Heart left ventricle (tissue), 16 donors: ENCODE measurements at regions of chr12 and their contacts with region 1.

Region 1: GRCh38 chr12:52372216-52373154 is 5.2 kb upstream of the KRT85 start:
- DNase-seq: peak; percentile 70 to 84 (median 79)
- ATAC-seq: peak; percentile 66 to 90 (median 82)
- H3K4me3 ChIP-seq: no peak overlapping the region
- H3K27ac ChIP-seq: no peak overlapping the region
- H3K4me1 ChIP-seq: peaks cover 0 to 10% (median 0%) of the 10 kb centered on the region in 12 donors
- H3K27me3 ChIP-seq: peaks cover 0 to 12% (median 0%) of the 10 kb centered on the region in 9 donors
- CTCF ChIP-seq: peak; percentile 60 to 84 (median 74)
- POLR2A ChIP-seq: no peak

Region 2: DNA sequence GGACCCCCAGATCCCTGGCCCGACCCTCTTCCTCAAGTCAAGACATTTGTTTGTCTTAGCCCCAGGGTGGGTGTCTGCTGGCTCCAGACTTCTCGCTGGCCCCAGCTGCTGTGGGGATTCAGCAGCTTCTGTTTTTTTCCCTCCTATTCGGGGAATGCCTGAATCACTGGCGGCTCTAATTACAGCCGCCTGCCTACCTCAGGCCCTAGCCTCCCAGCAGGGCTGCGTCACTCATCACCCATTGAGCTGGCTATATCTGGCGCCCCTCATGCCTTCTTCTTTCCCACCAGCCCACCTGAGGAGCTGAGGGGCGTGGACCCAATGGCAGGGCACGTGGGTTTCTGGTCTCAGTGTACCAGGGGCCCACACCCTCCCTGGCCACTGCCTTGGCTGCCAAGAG is 190.7 kb before region 1 on chr12:
- intact Hi-C with region 1: no loop called
- DNase-seq: peak in 1 of 5 donors; percentile 39
- ATAC-seq: no peak
- H3K4me3 ChIP-seq: no peak overlapping the region
- H3K27ac ChIP-seq: no peak overlapping the region
- H3K4me1 ChIP-seq: peaks cover 0 to 62% (median 19%) of the 10 kb centered on the region in 12 donors
- H3K27me3 ChIP-seq: no peaks in the 10 kb centered on the region
- CTCF ChIP-seq: no peak
- POLR2A ChIP-seq: no peak

Region 3: DNA sequence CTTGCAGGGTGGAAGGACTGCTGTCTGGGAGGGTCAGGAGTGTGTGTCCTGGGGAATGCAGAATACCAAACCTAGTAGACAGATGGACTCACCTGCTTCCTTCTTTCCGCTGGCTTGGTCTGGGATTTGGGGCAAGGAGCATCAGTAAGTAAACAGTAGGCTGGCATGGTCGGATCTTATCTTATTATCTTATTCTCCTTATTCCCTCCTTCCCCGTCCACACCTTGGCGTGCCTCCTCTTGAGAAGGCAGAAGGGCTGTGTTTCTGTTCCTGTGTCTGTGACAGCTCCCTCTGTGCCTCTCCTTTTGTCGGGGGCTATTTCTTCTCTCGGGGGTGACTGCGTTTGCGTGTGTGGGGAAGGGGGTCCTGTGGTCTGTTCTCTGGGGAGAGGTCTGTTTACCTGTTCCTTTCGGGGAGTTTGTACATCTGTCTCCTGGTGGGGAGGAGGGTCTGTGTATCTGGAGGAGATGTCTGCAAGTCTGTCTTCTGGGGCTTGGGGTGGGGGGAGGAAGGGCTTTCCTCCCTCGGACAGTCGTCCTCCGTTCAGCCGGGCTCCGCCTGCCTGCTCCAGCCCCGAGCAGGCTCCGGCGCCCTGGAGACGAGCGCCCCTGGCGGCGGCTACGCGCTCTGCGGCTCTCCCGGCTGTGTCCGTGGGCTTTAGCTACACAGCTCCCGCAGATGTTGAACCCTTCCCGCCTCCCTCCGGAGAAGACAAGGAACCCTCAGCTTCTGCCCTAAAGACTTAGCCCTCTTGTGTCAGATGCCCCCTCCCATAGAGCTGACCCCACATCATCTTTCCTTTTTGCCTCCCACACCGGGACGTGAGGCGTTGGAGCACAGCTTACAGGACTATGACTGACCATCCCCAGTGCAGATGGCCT is 93.7 kb before region 1 on chr12:
- intact Hi-C with region 1: no loop called
- DNase-seq: peak; percentile 61 to 90 (median 70)
- ATAC-seq: peak; percentile 79 to 96 (median 92)
- H3K4me3 ChIP-seq: no peak overlapping the region
- H3K27ac ChIP-seq: peak overlapping the region in 1 of 12 donors; percentile 79
- H3K4me1 ChIP-seq: peaks cover 0 to 29% (median 11%) of the 10 kb centered on the region in 12 donors
- H3K27me3 ChIP-seq: peaks cover 0 to 31% (median 3%) of the 10 kb centered on the region in 9 donors
- CTCF ChIP-seq: peak; percentile 94 to 99 (median 98)
- POLR2A ChIP-seq: no peak

Region 4: DNA sequence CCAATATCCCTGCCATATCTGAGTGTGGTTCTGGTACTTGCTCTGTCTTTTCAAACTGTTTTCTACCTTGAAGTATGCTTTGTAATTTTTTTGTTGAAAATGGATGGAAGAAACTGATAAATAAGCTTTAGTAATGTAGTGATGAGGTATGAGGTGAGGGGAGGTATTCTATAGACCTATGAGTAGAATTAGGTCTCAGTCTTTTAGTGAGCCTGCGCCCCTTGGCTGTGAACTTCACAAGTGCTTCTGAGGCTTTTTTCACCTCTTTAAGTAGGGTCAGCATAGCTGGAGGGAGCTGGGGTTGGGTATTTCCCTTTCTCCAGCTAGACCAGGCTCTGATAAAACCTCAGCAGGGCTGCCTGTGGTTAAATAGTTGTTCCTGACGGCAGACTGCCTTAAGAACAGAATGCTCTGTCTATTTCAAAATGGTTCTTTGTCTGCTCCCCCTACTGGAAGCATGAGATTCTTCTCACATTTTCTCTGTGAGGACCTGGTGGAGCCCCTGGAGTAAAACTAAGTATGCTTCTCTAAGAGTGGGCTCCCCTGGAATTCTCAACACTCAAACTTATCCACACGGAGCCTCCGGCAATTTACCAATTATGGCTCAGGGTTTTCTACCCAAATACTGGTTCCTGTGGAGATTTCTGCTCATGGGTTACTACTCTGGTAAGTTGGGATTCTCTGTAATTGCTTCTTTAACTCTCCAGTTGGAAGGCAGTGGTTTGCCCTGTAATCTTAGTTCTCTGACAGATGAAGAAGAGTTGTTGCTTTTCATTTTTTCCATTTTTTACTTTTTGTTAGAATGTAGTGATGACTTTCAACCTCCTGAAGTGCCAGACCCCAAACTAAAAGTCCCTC is 134.6 kb after region 1 on chr12:
- intact Hi-C with region 1: loop called in 9 of 10 experiments (anchors 1 to 5 kb)
- DNase-seq: no peak
- ATAC-seq: peak in 3 of 4 donors; percentile 39 to 69 (median 51)
- H3K4me3 ChIP-seq: no peak overlapping the region
- H3K27ac ChIP-seq: no peak overlapping the region
- H3K4me1 ChIP-seq: peaks cover 0 to 3% (median 0%) of the 10 kb centered on the region in 12 donors
- H3K27me3 ChIP-seq: peaks cover 0 to 29% (median 0%) of the 10 kb centered on the region in 9 donors
- CTCF ChIP-seq: peak; percentile 31 to 63 (median 49)
- POLR2A ChIP-seq: no peak

Region 5: GRCh38 chr12:52865090-52865944 is 492.8 kb after region 1 on chr12:
- intact Hi-C with region 1: loop called in 2 of 10 experiments (anchors 5 kb)
- DNase-seq: peak; percentile 43 to 77 (median 61)
- ATAC-seq: peak in 3 of 4 donors; percentile 59 to 75 (median 62)
- H3K4me3 ChIP-seq: no peak overlapping the region
- H3K27ac ChIP-seq: no peak overlapping the region
- H3K4me1 ChIP-seq: peaks cover 0 to 5% (median 0%) of the 10 kb centered on the region in 12 donors
- H3K27me3 ChIP-seq: no peaks in the 10 kb centered on the region
- CTCF ChIP-seq: peak; percentile 56 to 80 (median 73)
- POLR2A ChIP-seq: no peak

Region 6: GRCh38 chr12:52870351-52871290 is 498.1 kb after region 1 on chr12:
- intact Hi-C with region 1: loop called in 5 of 10 experiments (anchors 5 kb)
- DNase-seq: peak; percentile 24 to 77 (median 52)
- ATAC-seq: peak in 3 of 4 donors; percentile 12 to 38 (median 38)
- H3K4me3 ChIP-seq: no peak overlapping the region
- H3K27ac ChIP-seq: peak overlapping the region in 5 of 12 donors; percentile 13 to 55 (median 36)
- H3K4me1 ChIP-seq: peaks cover 0 to 39% (median 10%) of the 10 kb centered on the region in 12 donors
- H3K27me3 ChIP-seq: no peaks in the 10 kb centered on the region
- CTCF ChIP-seq: peak; percentile 47 to 73 (median 64)
- POLR2A ChIP-seq: no peak

Region 7: DNA sequence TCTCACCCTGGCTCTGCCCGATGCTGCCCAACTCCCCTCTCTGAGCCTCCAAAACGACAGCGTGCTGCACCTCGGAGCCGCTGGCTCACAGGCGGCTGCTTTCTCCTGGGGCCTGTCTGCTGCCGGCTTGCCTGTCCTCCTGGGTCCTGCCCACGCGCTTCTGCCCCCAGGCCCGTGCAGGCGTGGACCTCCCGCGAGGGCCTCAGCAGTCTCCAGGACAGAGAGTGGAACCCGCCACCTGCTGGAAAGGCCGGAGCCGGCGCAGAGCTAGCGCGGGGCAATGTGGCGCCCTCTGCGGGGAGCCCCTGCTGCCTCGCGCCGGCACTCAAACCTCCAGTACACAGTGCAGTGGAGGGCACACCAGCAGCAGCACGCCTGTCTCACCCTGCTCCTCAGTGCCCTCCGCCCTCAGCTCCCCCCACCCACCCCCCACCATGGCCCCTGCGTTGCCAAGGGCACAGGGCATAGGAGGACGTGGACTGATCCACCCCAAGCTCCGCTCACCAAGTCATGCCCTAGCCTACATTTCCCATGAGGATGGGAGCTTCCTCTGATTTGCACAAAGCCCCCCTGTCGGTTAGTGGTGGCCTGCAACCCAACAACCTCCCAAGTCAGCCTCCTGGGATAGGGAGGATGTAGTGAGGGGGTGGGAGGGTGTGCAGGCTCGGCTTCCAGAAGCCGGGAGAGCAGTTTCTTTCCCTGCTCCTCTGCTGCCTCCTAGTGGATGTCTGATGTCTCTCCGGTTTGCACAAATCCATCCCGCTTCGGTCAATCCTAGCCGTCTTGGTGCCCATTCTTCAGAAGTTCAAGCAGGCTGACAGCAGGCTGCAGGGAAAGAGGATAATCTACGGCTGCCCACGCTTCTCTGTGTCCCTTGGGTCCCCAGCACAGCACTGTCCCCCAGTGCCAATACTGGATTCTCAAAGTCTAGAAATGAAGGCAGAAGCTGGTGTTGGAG is 507.2 kb after region 1 on chr12:
- intact Hi-C with region 1: loop called in 9 of 10 experiments (anchors 1 to 5 kb)
- DNase-seq: peak; percentile 76 to 87 (median 82)
- ATAC-seq: peak; percentile 70 to 92 (median 89)
- H3K4me3 ChIP-seq: peak overlapping the region in 9 of 12 donors; percentile 11 to 46 (median 33)
- H3K27ac ChIP-seq: peak overlapping the region in 1 of 12 donors; percentile 42
- H3K4me1 ChIP-seq: peaks cover 0 to 18% (median 8%) of the 10 kb centered on the region in 12 donors
- H3K27me3 ChIP-seq: peaks cover 0 to 17% (median 0%) of the 10 kb centered on the region in 9 donors
- CTCF ChIP-seq: peak; percentile 55 to 77 (median 66)
- POLR2A ChIP-seq: no peak

Region 8: GRCh38 chr12:52980693-52981423 is 608.4 kb after region 1 on chr12:
- intact Hi-C with region 1: loop called in 4 of 10 experiments (anchors 5 to 10 kb)
- DNase-seq: peak; percentile 85 to 92 (median 88)
- ATAC-seq: peak; percentile 71 to 96 (median 95)
- H3K4me3 ChIP-seq: no peak overlapping the region
- H3K27ac ChIP-seq: no peak overlapping the region
- H3K4me1 ChIP-seq: peaks cover 0 to 3% (median 0%) of the 10 kb centered on the region in 12 donors
- H3K27me3 ChIP-seq: peaks cover 0 to 20% (median 0%) of the 10 kb centered on the region in 9 donors
- CTCF ChIP-seq: peak; percentile 88 to 99 (median 96)
- POLR2A ChIP-seq: no peak